ENCODE measurements at regions of chr5 and their contacts with region 1.

Region 1: DNA sequence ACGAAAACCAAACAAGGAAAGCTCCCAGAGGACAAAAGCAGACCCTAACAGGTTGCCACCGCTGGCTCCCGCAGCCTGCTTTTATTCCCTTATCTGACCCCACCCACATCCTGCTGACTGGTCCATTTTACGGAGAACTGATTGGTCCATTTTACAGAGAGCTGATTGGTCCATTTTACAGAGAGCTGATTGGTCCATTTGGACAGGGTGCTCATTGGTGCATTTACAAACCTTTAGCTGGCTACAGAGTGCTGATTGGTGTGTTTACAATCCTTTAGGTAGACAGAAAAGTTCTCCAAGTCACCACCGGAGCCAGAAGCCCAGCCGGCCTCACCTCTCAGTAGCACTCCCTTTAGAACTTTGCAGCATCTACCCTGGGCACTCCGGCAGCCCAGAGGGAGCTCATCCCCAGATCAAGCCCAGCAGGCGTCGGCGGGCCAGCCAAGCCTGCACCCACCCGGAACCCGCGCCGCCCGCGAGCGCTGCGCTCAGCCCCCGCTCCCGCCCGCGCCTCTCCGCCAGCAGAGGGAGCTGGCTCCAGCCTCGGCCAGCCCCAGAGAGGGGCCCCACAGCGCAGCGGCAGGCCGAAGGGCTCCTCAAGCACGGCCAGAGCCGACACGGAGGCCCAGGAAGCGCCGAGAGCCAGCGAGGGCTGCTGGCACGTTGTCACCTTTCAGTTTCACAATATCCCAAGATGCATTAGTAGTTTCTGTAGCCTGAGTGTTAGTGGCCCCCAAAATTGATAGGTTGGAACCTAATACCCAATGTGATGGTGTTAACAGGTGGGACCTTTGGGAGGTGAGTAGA is 35.3 kb upstream of the CLPTM1L start:
- DNase-seq: peak in 1 of 2 experiments; percentile 86
- H3K4me3 ChIP-seq: peak overlapping the region in 1 of 4 experiments; percentile 14; a peak in 3 of 8 replicates
- H3K27ac ChIP-seq: no peak overlapping the region
- H3K4me1 ChIP-seq: peaks cover 0 to 6% (median 4%) of the 10 kb centered on the region in 4 experiments; a peak in 6 of 7 replicates
- H3K27me3 ChIP-seq: peaks cover 1 to 30% (median 26%) of the 10 kb centered on the region in 4 experiments
- CTCF ChIP-seq: peak in 2 of 3 experiments; percentile 74 to 98; a peak in 3 of 4 replicates
- EP300 ChIP-seq: no peak
- POLR2A ChIP-seq: no peak
- RAD21 ChIP-seq: peak; percentile 66 to 78

Region 2: GRCh38 chr5:1185652-1186350 is 194.4 kb before region 1 on chr5:
- CTCF ChIA-PET with region 1: no interaction called
- POLR2A ChIA-PET with region 1: no interaction called
- DNase-seq: no peak
- H3K4me3 ChIP-seq: no peak overlapping the region
- H3K27ac ChIP-seq: no peak overlapping the region
- H3K4me1 ChIP-seq: peaks cover 0 to 3% (median 0%) of the 10 kb centered on the region in 4 experiments; a peak in 1 of 7 replicates
- H3K27me3 ChIP-seq: no peaks in the 10 kb centered on the region
- CTCF ChIP-seq: no peak
- EP300 ChIP-seq: no peak
- POLR2A ChIP-seq: no peak
- RAD21 ChIP-seq: no peak

Region 3: DNA sequence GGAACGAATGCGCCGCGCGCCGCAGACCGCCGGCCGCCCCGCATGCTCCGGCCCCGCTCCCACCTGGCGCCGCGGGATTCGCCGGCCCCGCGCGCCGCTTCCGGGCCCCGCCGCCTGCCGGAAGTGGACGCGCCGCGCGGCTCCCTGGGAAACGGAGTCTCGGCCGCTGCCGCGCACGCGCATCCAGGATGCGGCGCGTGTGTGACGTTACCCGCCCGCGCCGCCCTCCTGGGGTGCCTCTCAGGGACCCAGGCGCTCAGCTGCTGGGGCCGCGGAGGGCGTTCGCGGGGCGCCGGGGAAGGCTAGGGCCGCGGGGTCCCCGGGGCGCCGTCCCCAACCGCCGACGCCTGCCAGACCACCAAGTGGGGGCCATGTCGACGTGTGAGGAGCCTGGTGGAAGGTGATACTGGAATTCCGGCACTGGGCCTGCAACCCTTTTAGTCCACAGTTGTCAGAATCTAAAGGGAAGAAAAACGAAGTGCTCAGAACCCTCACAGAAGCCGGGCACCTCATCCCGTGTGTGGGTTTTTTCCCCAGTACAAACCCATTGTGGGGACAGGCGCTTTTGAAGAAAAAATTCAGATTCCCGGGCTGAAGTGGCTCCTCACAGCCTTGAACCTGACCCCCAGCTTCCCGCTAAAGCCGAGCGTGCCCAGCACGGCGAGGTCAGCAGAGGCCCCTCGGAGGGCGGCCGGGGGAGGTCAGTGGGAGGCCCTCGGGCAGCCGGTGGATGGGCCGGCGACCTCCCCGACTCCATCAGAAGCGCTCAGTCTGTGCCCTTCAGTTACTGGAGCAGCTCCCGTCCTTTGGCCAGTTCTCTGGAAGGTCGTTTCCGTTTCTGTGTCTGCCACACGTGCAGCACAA is 35.0 kb before region 1 on chr5 and contains the start of gene CLPTM1L:
- CTCF ChIA-PET with region 1: interaction called, 27 read pairs
- POLR2A ChIA-PET with region 1: interaction called, 4 read pairs
- DNase-seq: peak; percentile 25 to 91
- H3K4me3 ChIP-seq: peak within 1 kb of the TSS; percentile 69 to 91 (median 86)
- H3K27ac ChIP-seq: peak within 1 kb of the TSS; percentile 29; the same call in 1 of the 2 replicates
- H3K4me1 ChIP-seq: peaks cover 0 to 12% (median 1%) of the 10 kb centered on the region in 4 experiments; a peak in 4 of 7 replicates
- H3K27me3 ChIP-seq: no peaks in the 10 kb centered on the region
- CTCF ChIP-seq: no peak
- EP300 ChIP-seq: no peak
- POLR2A ChIP-seq: peak in 1 of 2 experiments; percentile 55; a peak in 2 of 3 replicates
- RAD21 ChIP-seq: no peak
- total RNA-seq, gene CLPTM1L: 102 and 109 TPM in 2 replicates

Region 4: DNA sequence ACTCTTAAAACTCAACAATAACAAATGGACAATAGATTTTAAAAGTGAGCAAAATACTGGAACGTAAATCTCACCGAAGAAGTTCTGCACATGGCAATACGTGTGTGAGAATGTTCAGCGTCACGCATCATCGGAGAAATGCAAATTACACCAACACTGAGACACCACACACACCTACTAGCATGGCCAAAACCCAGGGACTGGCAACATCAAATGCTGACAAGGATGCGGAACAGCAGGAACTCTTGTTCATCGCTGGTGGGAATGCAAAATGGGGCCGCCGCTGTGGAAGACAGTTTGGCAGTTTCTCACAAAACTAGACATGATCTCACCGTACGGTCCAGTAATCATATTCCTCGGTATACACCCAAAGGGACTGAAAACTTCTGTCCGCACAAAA is 13.7 kb before region 1 on chr5:
- CTCF ChIA-PET with region 1: interaction called, 15 read pairs
- POLR2A ChIA-PET with region 1: no interaction called
- DNase-seq: no peak
- H3K4me3 ChIP-seq: no peak overlapping the region
- H3K27ac ChIP-seq: no peak overlapping the region
- H3K4me1 ChIP-seq: peaks cover 0 to 3% (median 1%) of the 10 kb centered on the region in 4 experiments; a peak in 1 of 7 replicates
- H3K27me3 ChIP-seq: no peaks in the 10 kb centered on the region
- CTCF ChIP-seq: no peak
- EP300 ChIP-seq: no peak
- POLR2A ChIP-seq: no peak
- RAD21 ChIP-seq: no peak

Region 5: GRCh38 chr5:1445313-1445894 is 65.2 kb after region 1 on chr5 and contains the start of gene SLC6A3:
- CTCF ChIA-PET with region 1: interaction called, 10 read pairs
- POLR2A ChIA-PET with region 1: no interaction called
- DNase-seq: peak in 1 of 2 experiments; percentile 84
- H3K4me3 ChIP-seq: peak within 1 kb of the TSS; percentile 36 to 71 (median 41)
- H3K27ac ChIP-seq: no peak within 1 kb of the TSS
- H3K4me1 ChIP-seq: peaks cover 0 to 6% (median 0%) of the 10 kb centered on the region in 4 experiments; a peak in 3 of 7 replicates
- H3K27me3 ChIP-seq: peaks cover 30 to 73% (median 62%) of the 10 kb centered on the region in 4 experiments
- CTCF ChIP-seq: no peak
- EP300 ChIP-seq: no peak
- POLR2A ChIP-seq: no peak
- RAD21 ChIP-seq: no peak
- total RNA-seq, gene SLC6A3: 0.46 and 0.48 TPM in 2 replicates

Region 6: GRCh38 chr5:1479581-1480188 is 99.5 kb after region 1 on chr5:
- CTCF ChIA-PET with region 1: interaction called, 12 read pairs
- POLR2A ChIA-PET with region 1: no interaction called
- DNase-seq: peak in 1 of 2 experiments; percentile 76
- H3K4me3 ChIP-seq: no peak overlapping the region
- H3K27ac ChIP-seq: no peak overlapping the region
- H3K4me1 ChIP-seq: peaks cover 0 to 4% (median under 1%) of the 10 kb centered on the region in 4 experiments; a peak in 2 of 7 replicates
- H3K27me3 ChIP-seq: no peaks in the 10 kb centered on the region
- CTCF ChIP-seq: peak in 2 of 3 experiments; percentile 79 to 81; a peak in 3 of 4 replicates
- EP300 ChIP-seq: no peak
- POLR2A ChIP-seq: 0 out of 3 replicates have a peak, but pooled peaks of 1 of the 2 experiments have one; percentile 25
- RAD21 ChIP-seq: peak; percentile 62 to 76

Region 7: DNA sequence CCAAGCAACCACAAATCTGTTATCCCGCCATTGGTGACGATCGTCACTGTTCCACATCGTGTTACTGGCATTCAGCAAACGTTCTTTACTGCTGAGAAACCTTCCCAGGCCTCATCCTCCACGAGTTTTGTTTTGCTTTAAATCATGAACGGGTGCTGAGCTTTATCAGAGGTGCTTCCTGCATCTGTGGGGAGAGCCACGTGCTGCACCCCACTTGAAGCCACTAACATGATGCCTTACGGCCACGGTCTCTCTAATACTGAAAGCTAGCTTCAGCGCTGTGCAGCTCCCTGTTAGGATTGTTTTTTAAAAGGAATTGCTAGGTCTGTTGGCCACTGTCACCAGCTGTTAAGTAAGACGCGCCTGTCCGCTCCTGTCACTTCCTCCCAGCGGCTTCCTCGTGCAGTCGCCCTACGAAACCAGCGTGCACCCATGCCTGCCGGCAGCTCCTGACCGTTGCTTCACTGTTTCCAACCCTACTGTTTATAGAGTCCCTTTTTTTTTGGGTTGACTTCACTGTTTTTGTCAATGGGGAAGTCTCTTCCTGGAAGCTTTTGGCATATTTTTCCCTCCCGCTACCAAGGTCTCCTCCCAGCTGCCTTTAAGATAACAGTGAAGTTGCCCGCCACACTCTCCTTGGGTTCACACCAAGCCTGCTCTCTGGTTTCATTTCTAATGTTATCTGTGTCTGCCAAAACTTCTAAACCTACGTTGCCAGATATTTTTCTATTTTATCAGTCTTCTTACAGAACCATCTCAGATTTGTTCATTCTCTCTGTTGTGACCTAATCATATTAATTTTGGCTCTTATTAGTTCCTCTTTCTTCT is 123.2 kb after region 1 on chr5:
- CTCF ChIA-PET with region 1: no interaction called
- POLR2A ChIA-PET with region 1: no interaction called
- DNase-seq: no peak
- H3K4me3 ChIP-seq: no peak overlapping the region
- H3K27ac ChIP-seq: no peak overlapping the region
- H3K4me1 ChIP-seq: peaks cover 2 to 38% (median 27%) of the 10 kb centered on the region in 4 experiments
- H3K27me3 ChIP-seq: no peaks in the 10 kb centered on the region
- CTCF ChIP-seq: no peak
- EP300 ChIP-seq: no peak
- POLR2A ChIP-seq: no peak
- RAD21 ChIP-seq: no peak